K562 (cell line): ENCODE measurements at regions of chr1 and their contacts with region 1.

Region 1: DNA sequence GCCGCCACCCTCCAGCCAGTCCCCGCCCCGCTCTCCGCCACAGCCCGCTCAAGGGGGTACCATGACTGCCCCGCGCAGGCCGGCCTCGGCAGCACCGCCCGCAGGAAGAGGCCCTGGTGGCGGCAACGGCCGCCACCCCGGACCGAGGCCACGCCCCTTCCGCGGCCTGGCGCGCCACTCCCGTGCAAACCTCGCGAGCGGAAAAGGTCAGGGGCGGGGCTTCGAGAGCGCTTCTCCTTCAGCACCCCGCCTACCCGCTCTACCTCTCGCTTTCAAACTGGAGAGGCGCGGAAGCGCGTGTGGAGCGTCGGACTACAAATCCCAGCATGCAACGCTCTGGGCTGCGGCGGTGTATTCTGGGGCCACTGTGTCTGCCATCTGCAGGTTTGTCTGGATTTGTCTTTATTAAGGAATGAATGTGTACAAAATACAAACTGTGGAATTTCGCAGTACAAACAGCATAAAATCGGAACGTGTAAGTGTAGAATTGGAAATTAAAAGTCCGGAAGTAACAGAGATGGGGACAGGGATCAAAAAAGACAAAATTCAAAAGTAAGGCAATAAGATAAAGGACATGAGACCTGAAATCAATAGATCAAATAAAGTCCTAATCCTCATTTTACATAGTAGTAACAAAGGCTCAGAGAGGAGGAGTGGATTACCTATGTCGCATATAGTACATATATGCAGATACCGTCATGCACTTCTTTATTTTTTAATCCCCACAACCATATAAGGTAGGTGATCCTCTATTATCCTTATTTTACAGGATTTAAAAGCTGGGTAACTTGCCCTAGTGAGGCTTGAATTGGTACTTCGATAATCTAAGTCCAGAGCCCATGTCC is 464 bp upstream of the ADSS2 start:
- DNase-seq: peak; percentile 98 to 100 (median 99)
- ATAC-seq: peak; percentile 97
- H3K4me3 ChIP-seq: peak overlapping the region; percentile 72
- H3K27ac ChIP-seq: peak overlapping the region; percentile 34; the same call in 2 of the 3 replicates
- H3K4me1 ChIP-seq: peaks cover 9% of the 10 kb centered on the region in 2 experiments; a peak in 4 of 5 replicates
- H3K27me3 ChIP-seq: no peaks in the 10 kb centered on the region
- CTCF ChIP-seq: peak; percentile 70 to 91 (median 71)
- EP300 ChIP-seq: peak; percentile 54
- POLR2A ChIP-seq: no peak
- RAD21 ChIP-seq: peak; percentile 41 to 63; a peak in 2 of 4 replicates

Region 2: DNA sequence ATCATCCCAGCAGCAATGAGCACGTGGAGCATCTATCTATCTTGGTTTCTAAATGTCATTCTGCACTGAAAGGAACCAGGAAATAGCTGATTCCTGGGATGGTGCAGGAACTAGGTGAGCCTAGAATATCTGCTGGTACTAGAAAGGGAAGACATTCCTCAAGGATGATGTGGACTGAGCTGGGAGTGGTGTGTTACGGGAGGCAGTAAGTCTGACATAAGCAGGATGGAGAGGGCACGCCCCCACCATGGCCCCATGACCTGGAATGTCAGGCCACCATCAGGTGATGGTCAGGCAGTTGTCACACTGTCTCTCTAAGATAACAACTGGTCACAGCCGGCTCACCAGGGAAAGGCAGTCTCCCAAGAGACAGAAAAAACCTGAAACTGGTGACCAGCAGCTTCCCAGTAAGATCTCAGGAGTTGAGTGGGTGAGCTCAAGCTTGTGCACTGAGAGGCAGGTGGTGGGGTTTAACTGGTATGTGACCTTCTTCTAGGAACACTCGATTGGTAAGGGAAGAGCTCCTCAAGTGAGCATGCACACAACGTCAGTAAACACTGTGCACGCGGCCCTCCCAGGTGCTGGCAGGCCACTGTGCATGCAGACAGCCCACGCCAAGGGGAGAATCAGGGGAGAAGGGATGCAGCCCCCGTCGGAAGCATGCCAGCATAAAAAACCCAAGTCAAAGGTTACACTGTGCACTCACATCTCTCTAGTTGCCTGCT is 149.1 kb before region 1 on chr1:
- CTCF ChIA-PET with region 1: no interaction called
- POLR2A ChIA-PET with region 1: interaction called, 3 read pairs
- in situ Hi-C with region 1: no loop called
- intact Hi-C with region 1: loop called (anchors 1 kb)
- DNase-seq: peak; percentile 85 to 97 (median 87)
- ATAC-seq: peak; percentile 81
- H3K4me3 ChIP-seq: no peak overlapping the region
- H3K27ac ChIP-seq: peak overlapping the region; percentile 90
- H3K4me1 ChIP-seq: peaks cover 29 to 52% of the 10 kb centered on the region in 2 experiments
- H3K27me3 ChIP-seq: no peaks in the 10 kb centered on the region
- CTCF ChIP-seq: no peak; a peak in 1 of 6 replicates
- EP300 ChIP-seq: peak; percentile 98
- POLR2A ChIP-seq: no peak; the same call in 1 of the 2 replicates
- RAD21 ChIP-seq: peak in 1 of 2 experiments; percentile 36; a peak in 3 of 4 replicates

Region 3: DNA sequence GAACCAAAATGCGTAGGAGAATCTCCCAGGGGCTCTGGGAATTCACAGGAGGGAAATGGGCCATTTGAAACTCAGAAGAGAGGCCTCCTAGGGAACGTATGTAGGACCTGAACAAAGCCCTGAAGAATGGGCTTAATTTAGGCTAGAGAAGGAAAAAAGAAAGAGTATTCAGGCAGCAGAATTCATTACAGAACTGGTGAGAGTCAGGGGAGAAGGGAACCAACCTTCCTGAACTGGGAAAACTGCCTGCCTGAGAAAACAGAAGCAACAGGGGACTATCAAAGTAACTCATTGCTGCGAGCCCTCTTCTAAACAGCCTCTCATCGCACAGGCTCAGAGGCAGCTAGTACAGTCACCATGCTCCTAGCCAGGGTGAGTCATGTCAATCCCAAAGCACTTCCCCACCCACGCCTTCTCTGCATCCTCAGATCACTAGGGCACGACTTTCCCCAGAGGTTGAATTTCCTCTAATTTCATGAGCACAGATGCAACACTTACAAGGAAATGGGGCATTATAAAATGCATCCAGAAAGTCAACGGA is 98.6 kb before region 1 on chr1:
- CTCF ChIA-PET with region 1: no interaction called
- POLR2A ChIA-PET with region 1: no interaction called
- in situ Hi-C with region 1: no loop called
- intact Hi-C with region 1: loop called (anchors 2 kb)
- DNase-seq: peak; percentile 73 to 92 (median 80)
- ATAC-seq: peak; percentile 83
- H3K4me3 ChIP-seq: no peak overlapping the region
- H3K27ac ChIP-seq: peak overlapping the region; percentile 71
- H3K4me1 ChIP-seq: peaks cover 20 to 47% of the 10 kb centered on the region in 2 experiments
- H3K27me3 ChIP-seq: no peaks in the 10 kb centered on the region
- CTCF ChIP-seq: no peak
- EP300 ChIP-seq: peak; percentile 75
- POLR2A ChIP-seq: peak; percentile 52
- RAD21 ChIP-seq: peak in 1 of 2 experiments; percentile 32; a peak in 2 of 4 replicates

Region 4: GRCh38 chr1:244371242-244372141 is 80.7 kb before region 1 on chr1:
- CTCF ChIA-PET with region 1: no interaction called
- POLR2A ChIA-PET with region 1: no interaction called
- in situ Hi-C with region 1: no loop called
- intact Hi-C with region 1: loop called (anchors 5 kb)
- DNase-seq: no peak
- ATAC-seq: no peak
- H3K4me3 ChIP-seq: no peak overlapping the region
- H3K27ac ChIP-seq: no peak overlapping the region
- H3K4me1 ChIP-seq: peaks cover 31 to 41% of the 10 kb centered on the region in 2 experiments
- H3K27me3 ChIP-seq: no peaks in the 10 kb centered on the region
- CTCF ChIP-seq: no peak
- EP300 ChIP-seq: no peak
- POLR2A ChIP-seq: no peak
- RAD21 ChIP-seq: no peak

Region 5: DNA sequence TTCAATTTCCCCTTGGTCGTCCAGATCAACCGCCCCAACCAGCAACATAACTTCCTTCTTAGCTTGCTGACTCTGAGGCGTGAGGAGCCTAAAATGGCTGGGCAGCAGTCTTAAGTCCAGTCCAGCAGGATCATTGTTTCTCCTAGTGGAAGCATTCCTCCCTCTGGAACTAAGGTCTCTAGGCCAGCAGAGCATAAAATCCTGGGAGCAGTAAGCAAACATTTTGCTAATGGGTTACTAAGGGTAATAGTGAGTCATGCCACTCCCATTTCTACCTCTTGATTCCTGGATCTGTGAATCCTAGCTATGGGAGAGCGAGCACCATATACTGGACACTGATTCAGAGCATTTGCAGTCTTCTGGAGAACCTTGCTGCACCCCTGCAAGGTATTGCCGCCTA is 60.4 kb before region 1 on chr1:
- CTCF ChIA-PET with region 1: no interaction called
- POLR2A ChIA-PET with region 1: interaction called, 5 read pairs
- in situ Hi-C with region 1: no loop called
- intact Hi-C with region 1: loop called (anchors 1 kb)
- DNase-seq: no peak
- ATAC-seq: no peak
- H3K4me3 ChIP-seq: no peak overlapping the region
- H3K27ac ChIP-seq: no peak overlapping the region
- H3K4me1 ChIP-seq: peaks cover 12 to 17% of the 10 kb centered on the region in 2 experiments; a peak in 4 of 5 replicates
- H3K27me3 ChIP-seq: no peaks in the 10 kb centered on the region
- CTCF ChIP-seq: no peak
- EP300 ChIP-seq: no peak
- POLR2A ChIP-seq: no peak
- RAD21 ChIP-seq: no peak

Region 6: DNA sequence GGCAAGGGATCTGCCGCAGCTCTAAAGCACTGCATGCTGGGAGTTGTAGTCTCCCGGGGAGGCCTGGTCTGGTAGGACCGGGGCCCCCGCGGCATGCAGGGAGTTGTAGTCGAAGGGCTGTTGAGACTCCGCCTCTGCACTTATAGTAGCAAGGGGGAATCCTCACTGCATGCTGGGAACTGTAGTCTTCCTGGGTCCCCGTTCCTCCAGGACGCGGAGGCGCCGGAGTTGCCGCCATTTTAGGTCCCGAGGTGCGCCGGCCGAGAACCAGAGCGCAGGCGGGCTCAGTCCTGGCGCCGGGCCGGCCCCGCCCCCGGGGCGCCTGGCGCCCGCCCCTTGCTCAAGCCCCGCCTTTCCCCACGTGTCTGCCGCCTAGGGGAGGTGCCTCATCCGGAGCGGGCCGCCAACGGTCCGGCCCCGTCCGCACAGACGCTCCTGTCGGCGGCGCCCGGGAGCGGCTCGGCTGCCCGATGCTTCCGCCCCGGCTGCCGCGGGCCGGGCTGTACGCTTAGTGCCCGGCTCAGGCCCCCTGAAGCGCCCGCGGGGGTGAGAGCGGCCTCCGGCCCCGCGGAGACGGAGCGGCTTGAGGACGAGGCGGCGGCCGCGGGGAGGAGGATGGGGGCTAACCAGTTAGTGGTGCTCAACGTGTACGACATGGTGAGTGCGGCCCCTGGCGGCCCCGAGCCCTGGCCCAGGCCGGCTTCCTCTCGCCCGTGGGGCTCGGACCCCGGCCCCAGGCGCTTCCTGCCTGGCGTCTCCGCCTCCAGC is 200.7 kb after region 1 on chr1 and contains the start of gene DESI2:
- CTCF ChIA-PET with region 1: no interaction called
- POLR2A ChIA-PET with region 1: no interaction called
- in situ Hi-C with region 1: no loop called
- intact Hi-C with region 1: loop called (anchors 2 kb)
- DNase-seq: peak; percentile 98 to 99 (median 98)
- ATAC-seq: peak; percentile 95
- H3K4me3 ChIP-seq: peak within 1 kb of the TSS; percentile 76
- H3K27ac ChIP-seq: peak within 1 kb of the TSS; percentile 77
- H3K4me1 ChIP-seq: peaks cover 11 to 25% of the 10 kb centered on the region in 2 experiments
- H3K27me3 ChIP-seq: no peaks in the 10 kb centered on the region
- CTCF ChIP-seq: peak; percentile 54 to 60 (median 60)
- EP300 ChIP-seq: no peak; the same call in 1 of the 2 replicates
- POLR2A ChIP-seq: peak; percentile 86
- RAD21 ChIP-seq: peak; percentile 46 to 55
- polyA plus RNA-seq, gene DESI2: 17.4 to 20.4 TPM

Region 7: GRCh38 chr1:244778361-244778760 is 326.2 kb after region 1 on chr1:
- CTCF ChIA-PET with region 1: no interaction called
- POLR2A ChIA-PET with region 1: no interaction called
- in situ Hi-C with region 1: no loop called
- intact Hi-C with region 1: no loop called
- DNase-seq: no peak
- ATAC-seq: no peak
- H3K4me3 ChIP-seq: no peak overlapping the region
- H3K27ac ChIP-seq: no peak overlapping the region
- H3K4me1 ChIP-seq: 0 out of 5 replicates have a peak, but pooled peaks cover 0 to 3% of the 10 kb centered on the region in 2 experiments
- H3K27me3 ChIP-seq: peaks cover 45 to 63% of the 10 kb centered on the region in 2 experiments
- CTCF ChIP-seq: no peak
- EP300 ChIP-seq: no peak
- POLR2A ChIP-seq: no peak
- RAD21 ChIP-seq: no peak